ENCODE measurements at regions of chr17 and their contacts with region 1.

Region 1: GRCh38 chr17:59311130-59311920 is 20.1 kb upstream of the YPEL2 start:
- DNase-seq: peak; percentile 47
- H3K4me3 Mint-ChIP-seq: no peak overlapping the region
- H3K27ac Mint-ChIP-seq: no peak overlapping the region
- H3K4me1 Mint-ChIP-seq: peaks cover 6% of the 10 kb centered on the region
- H3K27me3 Mint-ChIP-seq: no peaks in the 10 kb centered on the region

Region 2: GRCh38 chr17:59331129-59331928 is 20.0 kb after region 1 on chr17 and contains the start of gene YPEL2:
- CTCF ChIA-PET with region 1: interaction called, 23 read pairs
- POLR2A ChIA-PET with region 1: no interaction called
- DNase-seq: peak; percentile 90
- H3K4me3 Mint-ChIP-seq: peak within 1 kb of the TSS; percentile 85
- H3K27ac Mint-ChIP-seq: peak within 1 kb of the TSS; percentile 89
- H3K4me1 Mint-ChIP-seq: peaks cover 65% of the 10 kb centered on the region
- H3K27me3 Mint-ChIP-seq: no peaks in the 10 kb centered on the region
- total RNA-seq, gene YPEL2: 17.1 to 18.4 TPM

Region 3: DNA sequence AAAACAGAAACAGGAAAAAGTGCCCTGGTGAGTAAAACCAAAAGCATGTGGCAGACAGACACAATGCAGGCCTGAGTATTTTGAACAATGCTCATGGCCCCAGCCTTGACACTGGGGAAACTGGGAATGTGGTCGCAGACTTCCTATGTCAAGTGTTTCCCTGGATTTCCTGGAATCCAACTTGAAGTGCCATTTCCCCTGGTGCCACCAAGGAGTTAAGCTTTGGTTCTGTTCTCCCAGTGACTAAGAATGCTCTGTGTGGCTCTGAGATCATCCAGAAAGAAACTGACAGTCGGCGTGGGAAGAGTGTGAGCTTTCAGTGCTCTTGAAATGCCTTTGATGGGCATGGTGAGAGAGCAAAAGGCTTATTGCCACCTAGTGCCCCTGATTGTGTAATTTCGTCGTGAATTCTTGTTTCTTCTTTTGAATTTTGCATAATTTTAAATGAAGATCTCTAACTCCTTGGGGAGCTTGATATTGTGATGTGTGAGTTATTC is 116.1 kb after region 1 on chr17:
- CTCF ChIA-PET with region 1: interaction called, 10 read pairs
- POLR2A ChIA-PET with region 1: interaction called, 3 read pairs
- DNase-seq: peak; percentile 29
- H3K4me3 Mint-ChIP-seq: no peak overlapping the region
- H3K27ac Mint-ChIP-seq: no peak overlapping the region
- H3K4me1 Mint-ChIP-seq: peaks cover 31% of the 10 kb centered on the region
- H3K27me3 Mint-ChIP-seq: no peaks in the 10 kb centered on the region

Region 4: GRCh38 chr17:59521204-59522126 is 210.1 kb after region 1 on chr17:
- CTCF ChIA-PET with region 1: interaction called, 14 read pairs
- POLR2A ChIA-PET with region 1: no interaction called
- DNase-seq: peak; percentile 61
- H3K4me3 Mint-ChIP-seq: no peak overlapping the region
- H3K27ac Mint-ChIP-seq: no peak overlapping the region
- H3K4me1 Mint-ChIP-seq: peaks cover 4% of the 10 kb centered on the region
- H3K27me3 Mint-ChIP-seq: peaks cover 24% of the 10 kb centered on the region

Measured in activated CD4-positive, alpha-beta memory T cell treated with anti-CD3 and anti-CD28 coated beads, Interleukin-2, amount 10 ng/mL, durations not matched to agents 7 days and 5 days (primary cell).